Heart right ventricle (tissue), 16 donors: ENCODE measurements at regions of chr18 and their contacts with region 1.

Region 1: GRCh38 chr18:12376718-12377555 is at the start of gene AFG3L2:
- DNase-seq: peak; percentile 100
- ATAC-seq: peak; percentile 91 to 96 (median 94)
- H3K4me3 ChIP-seq: peak within 1 kb of the TSS; percentile 76 to 94 (median 84)
- H3K27ac ChIP-seq: peak within 1 kb of the TSS; percentile 97 to 100 (median 100)
- H3K4me1 ChIP-seq: peaks cover 4 to 56% (median 32%) of the 10 kb centered on the region in 9 donors
- H3K27me3 ChIP-seq: no peaks in the 10 kb centered on the region
- CTCF ChIP-seq: no peak
- total RNA-seq, gene AFG3L2: 126 to 176 (median 145) TPM

Region 2: DNA sequence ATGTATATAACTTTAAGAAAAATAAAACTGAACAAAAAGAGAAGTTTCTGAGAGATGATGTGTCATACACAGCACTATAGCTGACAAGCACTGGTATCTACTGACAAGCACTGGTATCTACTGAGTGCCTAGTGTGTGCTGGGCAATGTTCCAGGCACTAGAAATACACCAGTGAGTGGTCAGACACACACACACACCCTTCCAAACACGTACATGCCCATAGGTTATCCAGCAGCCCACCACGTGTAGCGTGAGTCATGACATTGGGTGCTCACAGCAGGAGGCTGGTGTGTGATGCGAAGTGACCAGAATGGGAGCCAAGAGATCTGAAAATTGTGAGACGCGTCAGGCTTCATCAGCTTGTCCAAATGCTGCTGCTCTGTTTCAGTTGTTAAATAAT is 700.1 kb before region 1 on chr18:
- intact Hi-C with region 1: no loop called
- DNase-seq: no peak
- ATAC-seq: no peak
- H3K4me3 ChIP-seq: no peak overlapping the region
- H3K27ac ChIP-seq: no peak overlapping the region
- H3K4me1 ChIP-seq: no peaks in the 10 kb centered on the region
- H3K27me3 ChIP-seq: peaks cover 0 to 70% (median 66%) of the 10 kb centered on the region in 7 donors
- CTCF ChIP-seq: no peak

Region 3: GRCh38 chr18:12278741-12279682 is 97.9 kb before region 1 on chr18:
- intact Hi-C with region 1: loop called in 1 of 10 experiments (anchors 5 kb)
- DNase-seq: peak; percentile 82 to 92
- ATAC-seq: peak; percentile 93 to 97 (median 96)
- H3K4me3 ChIP-seq: peak overlapping the region; percentile 2 to 56 (median 49)
- H3K27ac ChIP-seq: peak overlapping the region; percentile 90 to 99 (median 98)
- H3K4me1 ChIP-seq: peaks cover 9 to 49% (median 27%) of the 10 kb centered on the region in 9 donors
- H3K27me3 ChIP-seq: no peaks in the 10 kb centered on the region
- CTCF ChIP-seq: peak in 2 of 9 donors; percentile 16 to 19

Region 4: DNA sequence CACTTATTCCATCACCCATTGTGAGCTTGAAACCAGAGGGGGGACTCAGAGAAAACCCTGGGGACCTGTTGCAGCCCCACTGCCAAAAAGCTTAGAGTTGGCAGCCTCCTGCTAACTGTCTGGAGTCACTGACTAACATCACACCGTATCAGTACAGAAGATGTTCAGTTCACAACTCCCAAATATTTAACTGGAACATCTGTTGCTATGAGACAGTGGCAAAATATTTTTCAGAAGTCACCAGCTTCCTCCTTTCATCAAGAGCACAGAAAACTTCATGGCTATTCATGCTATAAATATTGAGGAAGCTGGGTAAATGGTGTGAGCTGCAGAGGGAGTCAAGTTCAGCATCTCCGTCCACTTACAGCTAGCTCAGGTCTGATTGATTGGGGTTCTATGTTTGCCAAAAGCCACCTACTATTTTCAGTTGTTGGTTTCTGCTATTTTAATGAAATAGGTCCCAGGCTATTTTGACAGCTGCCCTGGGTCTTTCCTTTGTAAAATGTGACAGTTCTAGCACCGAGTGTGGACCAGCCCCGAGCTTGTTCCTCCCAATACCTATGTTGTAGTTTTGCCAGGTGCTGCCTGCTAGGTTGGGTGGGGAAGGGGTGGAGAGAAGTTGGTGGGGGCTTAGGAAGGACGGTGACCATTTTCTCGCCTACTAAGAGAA is 59.1 kb before region 1 on chr18:
- intact Hi-C with region 1: loop called in 1 of 10 experiments (anchors 10 kb)
- DNase-seq: no peak
- ATAC-seq: peak; percentile 40 to 87 (median 68)
- H3K4me3 ChIP-seq: no peak overlapping the region
- H3K27ac ChIP-seq: peak overlapping the region; percentile 20 to 86 (median 69)
- H3K4me1 ChIP-seq: peaks cover 14 to 85% (median 55%) of the 10 kb centered on the region in 9 donors
- H3K27me3 ChIP-seq: no peaks in the 10 kb centered on the region
- CTCF ChIP-seq: no peak

Region 5: GRCh38 chr18:12657684-12658425 is 280.9 kb after region 1 on chr18 and contains the start of gene SPIRE1:
- intact Hi-C with region 1: loop called in 1 of 10 experiments (anchors 5 kb)
- DNase-seq: peak; percentile 73 to 79
- ATAC-seq: peak; percentile 83 to 94 (median 88)
- H3K4me3 ChIP-seq: peak within 1 kb of the TSS; percentile 67 to 89 (median 82)
- H3K27ac ChIP-seq: peak within 1 kb of the TSS; percentile 73 to 98 (median 95)
- H3K4me1 ChIP-seq: peaks cover 1 to 42% (median 26%) of the 10 kb centered on the region in 9 donors
- H3K27me3 ChIP-seq: no peaks in the 10 kb centered on the region
- CTCF ChIP-seq: peak in 3 of 9 donors; percentile 25 to 43 (median 28)
- total RNA-seq, gene SPIRE1: 35.5 to 65.3 (median 48.9) TPM

Region 6: DNA sequence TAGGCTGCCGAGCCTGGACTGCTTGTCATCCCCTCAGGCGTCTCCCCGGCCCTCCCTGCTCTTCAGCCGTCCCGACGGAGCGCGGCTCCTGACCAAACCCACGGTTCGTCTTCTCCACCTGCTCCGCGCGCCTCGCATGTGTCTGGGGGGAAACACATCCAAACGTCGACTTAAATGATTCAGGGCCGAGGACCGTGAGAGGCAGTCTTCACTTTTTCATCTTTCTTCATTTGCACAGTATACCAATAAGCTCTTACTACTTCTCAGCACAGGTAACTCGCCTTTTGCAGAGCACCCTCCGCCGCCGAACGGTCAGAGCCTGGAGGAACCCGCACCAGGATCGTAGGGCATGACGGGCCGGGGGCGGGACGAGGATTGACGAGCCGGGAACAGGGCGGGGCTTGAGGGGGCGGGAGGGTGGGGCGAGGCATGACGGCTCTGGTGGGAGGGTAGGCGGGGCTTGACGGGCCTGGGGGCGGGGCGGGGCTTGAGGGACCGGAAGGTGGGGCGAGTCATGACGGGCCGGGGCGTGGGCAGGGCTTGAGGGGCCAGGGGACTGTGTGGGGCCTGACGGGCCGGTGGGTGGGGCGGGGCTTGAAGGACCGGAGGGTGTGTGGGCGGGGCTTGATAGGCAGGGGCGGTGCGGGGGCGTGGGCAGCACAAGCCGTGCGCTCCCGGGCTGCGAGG is 570.6 kb after region 1 on chr18 and contains the start of gene SEH1L:
- intact Hi-C with region 1: loop called in 3 of 10 experiments (anchors 5 to 10 kb)
- DNase-seq: peak; percentile 99 to 100
- ATAC-seq: peak; percentile 95 to 99 (median 97)
- H3K4me3 ChIP-seq: peak within 1 kb of the TSS; percentile 56 to 81 (median 71)
- H3K27ac ChIP-seq: peak within 1 kb of the TSS; percentile 92 to 100 (median 97)
- H3K4me1 ChIP-seq: peaks cover 0 to 53% (median 23%) of the 10 kb centered on the region in 9 donors
- H3K27me3 ChIP-seq: no peaks in the 10 kb centered on the region
- CTCF ChIP-seq: no peak
- total RNA-seq, gene SEH1L: 15.0 to 24.6 (median 17.7) TPM